Common myeloid progenitor, CD34-positive (primary cell): ENCODE measurements at regions of chr3 and their contacts with region 1.

Region 1: DNA sequence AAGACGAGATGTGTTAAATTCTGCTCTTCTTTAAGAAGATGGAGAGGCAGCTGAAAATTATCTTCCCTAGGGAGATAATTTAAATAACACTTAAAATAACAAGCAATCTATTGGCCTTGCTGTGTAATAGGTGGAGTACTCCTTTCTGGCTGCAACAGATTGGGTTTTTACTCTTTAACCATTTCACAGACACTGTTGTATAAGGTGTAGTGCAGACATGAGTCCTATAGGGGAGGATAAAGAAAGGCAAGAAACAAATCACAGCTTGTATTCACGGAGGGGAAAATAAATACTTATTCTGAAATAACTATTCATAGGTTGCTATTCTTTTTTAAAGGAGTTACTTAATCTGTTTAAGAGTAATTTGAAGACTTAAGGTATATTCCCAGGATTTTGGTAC is 252.0 kb downstream of the ZPLD1 start:
- DNase-seq: no peak
- H3K4me3 ChIP-seq: no peak overlapping the region
- H3K27ac ChIP-seq: no peak overlapping the region
- H3K4me1 ChIP-seq: no peaks in the 10 kb centered on the region
- H3K27me3 ChIP-seq: peaks cover 0 to 2% (median 0%) of the 10 kb centered on the region in 5 experiments

Region 2: DNA sequence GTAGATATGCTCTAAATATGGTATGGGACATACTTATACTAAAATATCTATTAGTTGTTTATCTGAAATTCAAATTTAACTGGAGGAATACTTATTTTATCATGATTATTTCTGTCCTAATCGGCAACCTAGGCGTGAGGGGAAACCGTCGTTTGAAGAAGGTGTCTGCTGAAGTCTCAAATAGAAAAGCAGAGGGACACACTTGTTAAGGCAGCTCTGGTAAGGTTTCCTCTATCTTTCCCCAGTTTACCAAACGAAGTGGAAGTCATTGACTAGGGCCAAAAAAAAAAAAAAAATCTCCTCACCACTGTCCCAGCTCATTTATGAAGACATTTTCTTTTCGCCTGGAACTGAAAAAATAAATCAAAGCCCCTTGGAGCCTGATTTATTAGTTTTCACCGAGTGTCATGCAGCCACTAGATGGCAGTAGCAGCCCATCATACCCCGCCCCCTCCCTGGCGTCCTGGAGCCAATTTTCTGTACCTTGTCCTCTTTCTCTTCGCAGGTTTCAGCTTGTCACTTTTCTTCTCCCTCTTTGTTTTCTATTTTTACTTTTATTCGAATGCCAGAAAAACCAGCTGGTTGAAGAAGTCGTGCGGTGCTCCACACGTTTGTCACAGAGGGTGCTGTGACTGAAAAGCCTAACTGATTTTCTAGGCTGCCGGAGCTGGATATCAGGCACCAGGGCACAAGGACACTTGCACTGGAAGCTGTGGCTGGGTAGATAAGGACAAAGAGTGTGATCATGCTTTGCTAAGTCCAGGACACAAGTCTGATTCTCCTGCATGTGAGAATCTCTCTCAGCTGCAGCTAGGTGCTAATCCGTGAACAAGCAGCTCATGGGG is 13.3 kb before region 1 on chr3:
- CTCF ChIA-PET with region 1: interaction called, 19 read pairs
- POLR2A ChIA-PET with region 1: no interaction called
- DNase-seq: peak; percentile 27 to 64 (median 56)
- H3K4me3 ChIP-seq: no peak overlapping the region
- H3K27ac ChIP-seq: no peak overlapping the region
- H3K4me1 ChIP-seq: no peaks in the 10 kb centered on the region
- H3K27me3 ChIP-seq: peaks cover 0 to 8% (median 1%) of the 10 kb centered on the region in 5 experiments

Region 3: DNA sequence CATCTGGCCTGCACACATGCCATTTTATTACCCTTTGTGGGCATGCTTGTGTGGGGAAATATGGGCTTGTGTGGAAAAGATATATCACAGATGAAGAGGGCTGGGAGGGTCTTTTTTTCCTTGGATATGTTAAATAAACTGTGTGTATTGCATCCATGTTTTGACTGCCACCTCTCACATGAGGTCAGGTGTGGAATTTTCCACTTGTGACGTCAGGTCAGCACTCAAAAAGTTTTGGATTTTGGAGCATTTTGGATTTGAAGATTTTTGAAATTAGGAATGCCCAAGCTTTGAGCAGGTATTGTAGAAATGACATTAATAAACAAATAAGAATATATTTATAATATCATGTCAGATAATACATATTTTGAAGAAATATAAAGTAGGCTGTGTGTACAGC is 20.5 kb after region 1 on chr3:
- CTCF ChIA-PET with region 1: no interaction called
- POLR2A ChIA-PET with region 1: no interaction called
- DNase-seq: no peak
- H3K4me3 ChIP-seq: no peak overlapping the region
- H3K27ac ChIP-seq: no peak overlapping the region
- H3K4me1 ChIP-seq: no peaks in the 10 kb centered on the region
- H3K27me3 ChIP-seq: no peaks in the 10 kb centered on the region